Activated CD4-positive, alpha-beta memory T cell treated with anti-CD3 and anti-CD28 coated beads, Interleukin-2, amount 10 ng/mL, durations not matched to agents 7 days and 5 days (primary cell): ENCODE measurements at regions of chr10 and their contacts with region 1.

Region 1: DNA sequence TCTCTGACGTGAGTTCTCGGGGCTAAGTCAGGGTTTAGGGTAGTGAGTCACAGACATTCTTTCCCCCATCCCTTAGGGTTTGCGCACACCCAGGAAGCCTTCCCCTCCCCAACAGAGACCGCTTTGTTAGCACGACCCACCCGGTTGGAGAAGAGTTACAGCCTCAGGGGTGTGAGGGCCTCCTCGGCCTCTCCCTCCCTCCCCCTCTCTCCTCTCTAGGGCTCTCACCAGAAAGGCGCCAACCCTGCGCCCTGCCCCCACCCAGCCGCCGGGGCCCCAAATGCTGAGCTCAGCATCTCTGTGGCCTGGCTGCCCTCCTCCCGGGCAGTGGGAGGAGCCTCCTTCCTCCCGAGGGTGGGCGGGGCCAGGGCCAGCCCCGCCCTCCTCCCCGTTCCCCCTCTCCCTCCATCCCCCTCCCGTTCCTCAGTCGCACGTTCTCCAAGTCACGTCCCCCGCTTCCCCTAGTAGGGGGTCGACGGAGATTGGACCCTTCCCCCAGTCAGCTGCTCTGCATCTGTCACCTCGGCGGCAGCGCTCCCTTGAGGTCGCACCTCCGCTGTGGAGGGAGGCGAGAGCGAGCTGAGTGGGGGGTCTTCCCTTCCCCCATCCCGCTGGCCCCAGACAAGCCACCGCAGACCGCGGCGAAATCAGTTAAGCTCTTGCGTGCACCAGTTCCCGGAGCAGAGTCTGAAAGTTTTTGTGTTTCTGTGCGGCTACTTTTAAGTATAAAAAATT is 13.0 kb upstream of the DDIT4 start:
- DNase-seq: peak; percentile 95
- H3K4me3 Mint-ChIP-seq: peak overlapping the region; percentile 79
- H3K27ac Mint-ChIP-seq: peak overlapping the region; percentile 98
- H3K4me1 Mint-ChIP-seq: peaks cover 65% of the 10 kb centered on the region
- H3K27me3 Mint-ChIP-seq: no peaks in the 10 kb centered on the region

Region 2: GRCh38 chr10:72215652-72216549 is 44.9 kb before region 1 on chr10 and contains the starts of genes ANAPC16 and ASCC1:
- CTCF ChIA-PET with region 1: interaction called, 11 read pairs
- POLR2A ChIA-PET with region 1: interaction called, 19 read pairs
- DNase-seq: peak; percentile 94
- H3K4me3 Mint-ChIP-seq: peak within 1 kb of the TSS; percentile 98
- H3K27ac Mint-ChIP-seq: peak within 1 kb of the TSS; percentile 99
- H3K4me1 Mint-ChIP-seq: peaks cover 61% of the 10 kb centered on the region
- H3K27me3 Mint-ChIP-seq: no peaks in the 10 kb centered on the region
- total RNA-seq, gene ANAPC16: 94.2 to 101 TPM
- total RNA-seq, gene ASCC1: 35.5 to 36.2 TPM

Region 3: DNA sequence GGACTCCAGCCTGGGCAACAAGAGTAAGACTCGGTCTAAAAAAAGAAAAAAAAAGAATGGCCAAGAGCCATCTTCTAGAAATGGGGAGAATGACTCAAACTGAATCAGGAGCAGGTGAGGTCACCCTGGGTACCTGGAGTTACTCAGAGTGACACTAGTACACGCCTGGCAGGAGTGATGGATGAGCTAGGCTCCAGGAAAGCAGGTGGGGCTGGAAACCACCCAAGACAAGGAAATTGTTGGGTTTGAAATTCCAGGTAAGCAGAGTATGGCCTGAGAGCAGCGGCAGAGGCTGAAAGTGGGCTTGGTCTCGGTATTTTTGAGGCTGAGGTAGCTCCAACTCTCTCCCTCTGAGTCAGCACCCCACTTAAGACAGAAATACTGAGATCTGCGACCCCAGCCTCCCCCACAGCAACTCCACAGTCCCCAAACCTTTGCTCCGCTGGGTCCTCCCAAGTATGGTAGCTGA is 31.5 kb after region 1 on chr10:
- CTCF ChIA-PET with region 1: interaction called, 14 read pairs
- POLR2A ChIA-PET with region 1: interaction called, 59 read pairs
- DNase-seq: peak; percentile 60
- H3K4me3 Mint-ChIP-seq: peak overlapping the region; percentile 31
- H3K27ac Mint-ChIP-seq: peak overlapping the region; percentile 90
- H3K4me1 Mint-ChIP-seq: peaks cover 67% of the 10 kb centered on the region
- H3K27me3 Mint-ChIP-seq: no peaks in the 10 kb centered on the region

Region 4: DNA sequence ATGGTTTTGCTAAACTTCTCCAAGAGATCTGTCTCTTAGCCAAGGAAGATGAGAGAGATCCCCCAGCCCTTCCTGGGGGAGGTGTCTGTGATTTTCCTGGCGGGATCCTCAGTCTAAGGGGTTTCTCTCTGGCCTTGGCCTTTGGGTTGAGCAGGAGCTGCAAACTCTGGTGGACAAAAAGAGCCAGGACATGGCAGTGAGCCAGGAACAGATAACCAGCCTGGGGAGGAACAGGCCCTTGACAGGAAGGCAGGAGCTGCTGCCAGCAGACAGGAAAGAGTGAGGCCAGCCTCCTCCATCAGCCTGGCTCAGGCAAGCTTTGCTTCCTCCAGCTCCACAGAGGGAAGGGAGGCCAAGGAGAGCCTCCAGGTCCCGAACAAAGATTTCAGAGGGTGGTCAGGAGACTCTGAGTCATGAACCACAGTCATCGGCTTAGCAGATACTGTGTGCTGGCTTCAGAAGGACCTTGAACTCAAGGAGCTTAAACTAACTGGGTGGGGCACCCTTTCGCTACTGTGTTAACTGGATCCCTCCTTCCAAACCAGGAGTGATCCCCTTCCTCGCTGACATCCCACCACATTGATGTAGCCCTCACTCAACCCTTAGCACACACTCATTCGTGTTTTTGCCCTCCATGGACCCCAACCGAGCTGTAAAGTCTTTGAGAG is 47.7 kb after region 1 on chr10:
- CTCF ChIA-PET with region 1: interaction called, 6 read pairs
- POLR2A ChIA-PET with region 1: interaction called, 11 read pairs
- DNase-seq: peak; percentile 55
- H3K4me3 Mint-ChIP-seq: no peak overlapping the region
- H3K27ac Mint-ChIP-seq: peak overlapping the region; percentile 76
- H3K4me1 Mint-ChIP-seq: peaks cover 67% of the 10 kb centered on the region
- H3K27me3 Mint-ChIP-seq: no peaks in the 10 kb centered on the region